Ascending aorta (tissue), 2 donors: ENCODE measurements at regions of chr7 and their contacts with region 1.

Region 1: DNA sequence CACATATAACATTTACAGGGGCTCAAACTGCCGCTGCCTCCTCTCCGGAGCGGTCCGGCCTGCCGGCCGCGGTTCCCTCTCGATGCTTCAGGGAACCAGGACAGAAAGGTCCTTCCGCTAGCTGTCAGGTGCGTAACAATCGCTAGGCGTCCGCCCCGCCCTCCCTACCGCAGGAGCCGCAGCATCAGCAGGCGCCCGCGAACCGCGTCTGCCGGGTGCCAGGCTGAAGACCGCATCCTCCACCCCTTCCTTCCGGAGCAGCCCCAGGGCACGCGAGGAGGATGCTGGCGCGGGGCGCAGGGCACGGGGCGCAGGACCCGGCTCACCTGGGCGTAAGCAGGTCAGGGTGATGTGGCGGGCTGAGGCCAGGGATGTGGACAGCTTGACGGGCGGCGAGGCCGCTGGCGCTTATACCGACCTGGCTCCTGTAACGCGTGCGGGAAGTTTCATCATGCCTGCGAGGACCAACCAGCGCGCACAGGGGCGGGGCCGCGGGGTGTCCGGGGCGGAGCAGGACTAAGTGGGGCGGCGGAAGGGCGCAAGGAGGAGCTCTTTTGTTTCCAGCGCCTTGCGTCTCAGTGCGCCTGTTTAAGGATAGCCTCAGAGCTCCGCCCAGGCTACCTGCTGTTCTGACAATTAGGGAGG is at the start of gene ASNS:
- DNase-seq: peak; percentile 78 to 95
- H3K4me3 ChIP-seq: peak within 1 kb of the TSS; percentile 86 to 94
- H3K27ac ChIP-seq: peak within 1 kb of the TSS; percentile 68 to 86
- H3K4me1 ChIP-seq: peaks cover 0 to 3% of the 10 kb centered on the region in 2 donors
- H3K27me3 ChIP-seq: no peaks in the 10 kb centered on the region
- CTCF ChIP-seq: no peak
- total RNA-seq, gene ASNS: 41.7 TPM

Region 2: GRCh38 chr7:97971990-97972943 is 100.1 kb after region 1 on chr7:
- intact Hi-C with region 1: loop called (anchors 10 kb)
- DNase-seq: peak; percentile 12 to 86
- H3K4me3 ChIP-seq: peak overlapping the region; percentile 83 to 92
- H3K27ac ChIP-seq: peak overlapping the region; percentile 70 to 79
- H3K4me1 ChIP-seq: peaks cover 0 to 6% of the 10 kb centered on the region in 2 donors
- H3K27me3 ChIP-seq: no peaks in the 10 kb centered on the region
- CTCF ChIP-seq: peak in 1 of 3 experiments; percentile 21